Cardiac septum (tissue), 1 donor: ENCODE measurements at regions of chr1 and their contacts with region 1.

Region 1: GRCh38 chr1:196148367-196148970 is 459.8 kb downstream of the KCNT2 start:
- DNase-seq: no peak

Region 2: DNA sequence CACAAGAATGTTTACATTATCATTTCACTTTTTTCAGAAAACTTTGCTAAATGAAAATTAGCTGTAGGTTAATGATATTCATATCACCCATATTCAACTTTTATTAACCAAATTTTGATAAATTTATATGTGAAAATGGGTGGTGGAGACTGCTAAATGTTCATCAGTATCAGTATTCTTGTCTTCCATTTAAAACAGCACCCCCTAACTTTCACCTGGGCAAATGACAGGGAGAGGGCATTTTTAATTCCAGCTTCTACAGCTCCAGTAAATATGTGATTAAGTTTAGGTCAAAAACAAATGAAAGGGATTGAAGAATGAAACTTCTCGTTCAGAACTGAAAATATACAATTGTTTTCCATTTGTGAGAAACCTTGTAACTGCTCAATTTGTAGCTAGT is 262.5 kb before region 1 on chr1:
- intact Hi-C with region 1: no loop called
- DNase-seq: no peak

Region 3: DNA sequence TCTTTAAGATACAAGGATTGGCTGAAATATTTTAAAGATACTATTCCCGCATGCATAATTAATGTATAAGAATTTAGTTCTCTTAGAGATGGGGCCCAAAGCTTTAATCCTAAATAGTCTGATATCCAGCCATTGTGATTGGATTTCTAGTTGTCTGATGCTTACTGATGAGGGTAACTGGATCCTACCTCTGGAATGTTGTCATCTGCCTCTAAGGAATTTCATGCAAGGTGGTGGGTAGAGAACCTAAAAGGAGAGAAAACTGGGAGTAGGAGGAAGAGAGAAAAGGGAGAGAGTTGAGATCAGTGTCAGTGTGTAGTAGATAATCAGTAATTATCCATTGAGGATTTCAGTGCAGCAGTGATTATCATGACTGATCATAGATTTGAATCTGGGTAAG is 164.3 kb after region 1 on chr1:
- intact Hi-C with region 1: loop called (anchors 5 kb)
- DNase-seq: no peak